MCF 10A (cell line): ENCODE measurements at regions of chr5 and their contacts with region 1.

Region 1: DNA sequence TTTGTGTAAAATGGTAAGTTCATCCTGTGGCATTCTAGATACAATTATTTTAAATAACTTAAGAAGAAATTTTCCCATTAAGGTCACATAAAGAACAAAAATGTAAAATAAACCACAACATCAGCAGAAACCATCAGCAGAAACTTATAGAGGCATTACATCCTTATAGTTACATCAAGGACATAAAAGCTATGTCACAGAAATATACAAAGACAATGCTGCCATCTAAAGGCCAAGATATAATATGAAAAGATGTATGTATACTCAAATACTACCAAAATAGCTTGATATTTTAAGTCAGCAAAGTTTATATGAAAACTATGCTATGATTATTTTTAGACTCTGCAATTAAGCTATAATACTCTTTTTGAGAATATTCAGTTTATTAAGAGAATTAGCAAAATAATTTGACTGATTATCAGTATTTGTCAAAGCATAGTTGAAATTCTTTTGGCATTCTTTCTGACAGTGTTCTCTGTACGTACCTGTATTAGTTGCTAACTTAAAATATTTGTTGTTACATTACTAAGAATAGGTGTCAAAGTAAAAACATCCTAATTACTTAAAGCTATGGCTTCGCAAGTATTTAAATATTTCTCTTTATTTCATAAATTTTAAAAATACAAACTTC is 36.2 kb downstream of the FBXL17 start:
- DNase-seq: peak; percentile 59
- H3K4me3 Mint-ChIP-seq: no peak overlapping the region
- H3K27ac Mint-ChIP-seq: no peak overlapping the region
- H3K4me1 Mint-ChIP-seq: no peaks in the 10 kb centered on the region
- H3K27me3 Mint-ChIP-seq: no peaks in the 10 kb centered on the region
- CTCF ChIP-seq: peak; percentile 38

Region 2: GRCh38 chr5:107887166-107887943 is 458.3 kb before region 1 on chr5:
- CTCF ChIA-PET with region 1: no interaction called
- POLR2A ChIA-PET with region 1: no interaction called
- intact Hi-C with region 1: loop called (anchors 10 kb)
- DNase-seq: no peak
- H3K4me3 Mint-ChIP-seq: no peak overlapping the region
- H3K27ac Mint-ChIP-seq: no peak overlapping the region
- H3K4me1 Mint-ChIP-seq: no peaks in the 10 kb centered on the region
- H3K27me3 Mint-ChIP-seq: no peaks in the 10 kb centered on the region
- CTCF ChIP-seq: no peak

Region 3: DNA sequence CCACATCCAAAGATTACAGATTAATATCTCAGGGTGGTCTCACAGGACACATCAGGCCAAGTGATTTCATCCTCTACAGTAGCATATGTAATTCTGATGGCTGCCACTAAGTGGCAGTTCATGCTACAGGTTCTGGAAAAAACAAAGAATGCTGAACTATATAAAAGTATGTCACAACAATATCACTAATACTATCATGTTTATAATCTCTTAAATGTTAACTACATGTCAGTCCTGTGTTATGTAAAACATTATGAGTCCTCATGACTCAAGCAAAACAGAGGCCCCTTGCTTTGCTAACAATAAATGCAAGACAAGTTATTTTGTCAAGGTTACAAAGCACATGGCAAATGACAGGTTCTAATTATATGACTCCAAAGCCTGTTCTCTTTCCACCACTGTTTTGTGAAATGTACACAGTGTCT is 196.9 kb before region 1 on chr5:
- CTCF ChIA-PET with region 1: no interaction called
- POLR2A ChIA-PET with region 1: no interaction called
- intact Hi-C with region 1: loop called (anchors 2 kb)
- DNase-seq: peak; percentile 32
- H3K4me3 Mint-ChIP-seq: no peak overlapping the region
- H3K27ac Mint-ChIP-seq: no peak overlapping the region
- H3K4me1 Mint-ChIP-seq: no peaks in the 10 kb centered on the region
- H3K27me3 Mint-ChIP-seq: no peaks in the 10 kb centered on the region
- CTCF ChIP-seq: peak; percentile 45

Region 4: DNA sequence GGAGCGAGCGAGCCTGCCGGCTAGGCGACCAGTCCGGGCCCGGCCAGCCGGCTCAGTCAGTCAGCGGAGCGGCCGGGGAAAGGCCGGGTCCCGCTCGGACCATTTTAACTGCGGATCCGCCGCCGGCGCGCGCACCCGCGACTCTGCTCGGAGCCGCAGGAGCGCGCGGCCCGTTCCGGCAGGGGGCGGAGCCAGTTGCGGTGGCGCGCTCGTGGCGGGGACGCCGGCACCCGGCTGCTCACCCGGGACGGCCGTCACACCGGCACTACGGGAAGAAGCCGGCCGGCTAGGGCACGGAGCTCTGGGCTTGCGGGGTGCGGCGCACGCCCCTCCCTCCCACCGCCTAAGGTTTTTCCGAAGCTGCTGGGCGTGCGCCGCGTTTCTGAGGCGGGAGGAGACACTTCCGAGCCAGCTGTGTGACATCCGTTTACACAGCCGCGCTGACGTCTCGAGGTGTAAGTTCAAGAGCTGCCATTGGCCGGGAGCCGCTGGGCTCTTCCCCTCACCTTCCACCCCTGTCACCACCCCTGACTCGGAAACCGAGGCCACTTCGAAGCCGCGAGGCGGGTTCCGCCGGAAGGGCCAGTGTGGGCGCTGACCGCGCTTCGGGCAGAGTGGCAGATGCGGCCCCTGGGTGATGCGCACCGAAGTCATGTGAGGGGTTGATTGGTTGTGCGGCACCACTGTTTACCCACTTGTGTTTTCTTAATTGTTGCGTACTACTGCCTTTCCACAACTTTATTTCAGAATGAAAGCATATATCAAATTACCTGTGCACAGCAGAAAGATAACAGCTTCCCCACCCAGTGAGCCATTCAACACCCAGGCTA is 36.5 kb after region 1 on chr5 and contains the start of gene FBXL17:
- CTCF ChIA-PET with region 1: interaction called, 3 read pairs
- POLR2A ChIA-PET with region 1: interaction called, 10 read pairs
- intact Hi-C with region 1: no loop called
- DNase-seq: peak; percentile 94
- H3K4me3 Mint-ChIP-seq: peak within 1 kb of the TSS; percentile 71
- H3K27ac Mint-ChIP-seq: peak within 1 kb of the TSS; percentile 88
- H3K4me1 Mint-ChIP-seq: peaks cover 28% of the 10 kb centered on the region
- H3K27me3 Mint-ChIP-seq: no peaks in the 10 kb centered on the region
- CTCF ChIP-seq: no peak
- total RNA-seq, gene FBXL17: 18.2 and 18.3 TPM in 2 replicates